ENCODE measurements at regions of chr17 and their contacts with region 1.

Region 1: DNA sequence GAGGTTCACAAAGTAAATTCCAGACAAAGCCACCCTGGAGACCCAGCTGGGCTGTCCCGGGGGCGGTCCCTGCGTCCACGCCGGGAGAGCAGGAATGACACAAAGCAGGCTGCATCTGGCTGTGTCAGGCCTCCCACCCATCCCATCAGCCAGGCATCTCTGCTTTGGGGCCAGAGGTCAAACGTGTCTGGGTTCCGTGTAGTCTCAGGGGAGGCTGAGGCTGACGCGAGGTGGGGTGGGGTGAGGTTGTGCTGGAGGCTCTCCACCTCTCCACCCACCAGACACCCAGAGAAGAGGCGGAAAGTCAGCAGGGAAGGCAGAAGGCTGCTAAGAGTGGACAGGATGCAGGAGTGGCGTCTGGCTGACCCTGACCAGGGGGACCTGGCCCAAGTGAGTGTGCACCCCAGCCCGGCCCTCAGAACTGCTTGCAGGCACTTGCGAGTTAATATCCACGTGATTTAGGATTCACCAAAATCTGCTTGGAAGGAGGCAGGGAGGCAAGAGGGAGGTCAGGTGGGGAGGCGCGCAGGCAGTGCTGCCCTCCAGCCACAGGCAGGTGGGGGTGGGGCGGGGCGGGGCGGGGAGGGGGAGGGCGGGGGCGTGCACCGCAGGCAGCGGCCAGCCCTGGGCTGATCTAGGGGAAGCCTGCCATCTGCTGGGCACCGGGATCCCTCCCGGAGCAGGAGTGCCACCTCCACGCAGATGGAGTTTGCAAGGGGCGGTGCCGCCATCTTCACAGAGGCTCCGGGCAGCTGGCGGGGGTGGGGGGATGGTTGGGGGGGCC is 44.3 kb downstream of the TBC1D16 start:
- DNase-seq: peak; percentile 47 to 91
- ATAC-seq: peak; percentile 87 to 89 (median 88)
- H3K4me3 ChIP-seq: peak overlapping the region; percentile 24
- H3K4me3 Mint-ChIP-seq: peak overlapping the region; percentile 59
- H3K27ac ChIP-seq: no peak overlapping the region
- H3K27ac Mint-ChIP-seq: no peak overlapping the region
- H3K4me1 ChIP-seq: peaks cover 43% of the 10 kb centered on the region
- H3K4me1 Mint-ChIP-seq: peaks cover 16 to 20% of the 10 kb centered on the region in 2 donors
- H3K27me3 ChIP-seq: peaks cover 6% of the 10 kb centered on the region
- H3K27me3 Mint-ChIP-seq: peaks cover 8 to 18% of the 10 kb centered on the region in 2 donors
- CTCF ChIP-seq: peak; percentile 44

Region 2: GRCh38 chr17:79618383-79619067 is 372.8 kb before region 1 on chr17:
- intact Hi-C with region 1: no loop called
- DNase-seq: no peak
- ATAC-seq: no peak
- H3K4me3 ChIP-seq: no peak overlapping the region
- H3K4me3 Mint-ChIP-seq: no peak overlapping the region
- H3K27ac ChIP-seq: no peak overlapping the region
- H3K27ac Mint-ChIP-seq: no peak overlapping the region
- H3K4me1 ChIP-seq: no peaks in the 10 kb centered on the region
- H3K4me1 Mint-ChIP-seq: no peaks in the 10 kb centered on the region
- H3K27me3 ChIP-seq: no peaks in the 10 kb centered on the region
- H3K27me3 Mint-ChIP-seq: peaks cover 27 to 28% of the 10 kb centered on the region in 2 donors
- CTCF ChIP-seq: no peak

Region 3: GRCh38 chr17:79741751-79742588 is 249.4 kb before region 1 on chr17:
- intact Hi-C with region 1: loop called (anchors 5 kb)
- DNase-seq: peak; percentile 76 to 82
- ATAC-seq: peak; percentile 58 to 75 (median 72)
- H3K4me3 ChIP-seq: no peak overlapping the region
- H3K4me3 Mint-ChIP-seq: no peak overlapping the region
- H3K27ac ChIP-seq: no peak overlapping the region
- H3K27ac Mint-ChIP-seq: no peak overlapping the region
- H3K4me1 ChIP-seq: peaks cover 14% of the 10 kb centered on the region
- H3K4me1 Mint-ChIP-seq: peaks cover 7 to 12% of the 10 kb centered on the region in 2 donors
- H3K27me3 ChIP-seq: peaks cover 23% of the 10 kb centered on the region
- H3K27me3 Mint-ChIP-seq: peaks cover 23 to 28% of the 10 kb centered on the region in 2 donors
- CTCF ChIP-seq: peak; percentile 88

Region 4: GRCh38 chr17:79892459-79892858 is 98.9 kb before region 1 on chr17:
- intact Hi-C with region 1: no loop called
- DNase-seq: no peak
- ATAC-seq: peak in 1 of 3 donors; percentile 40
- H3K4me3 ChIP-seq: no peak overlapping the region
- H3K4me3 Mint-ChIP-seq: no peak overlapping the region
- H3K27ac ChIP-seq: no peak overlapping the region
- H3K27ac Mint-ChIP-seq: no peak overlapping the region
- H3K4me1 ChIP-seq: no peaks in the 10 kb centered on the region
- H3K4me1 Mint-ChIP-seq: no peaks in the 10 kb centered on the region
- H3K27me3 ChIP-seq: peaks cover 7% of the 10 kb centered on the region
- H3K27me3 Mint-ChIP-seq: peaks cover 16 to 29% of the 10 kb centered on the region in 2 donors
- CTCF ChIP-seq: no peak

Measured in natural killer cell (primary cell).